SK-N-SH (cell line): ENCODE measurements at regions of chr4 and their contacts with region 1.

Region 1: GRCh38 chr4:152640058-152640833 is 39.6 kb downstream of the TMEM154 start:
- DNase-seq: peak; percentile 42
- H3K4me3 ChIP-seq: no peak overlapping the region
- H3K27ac ChIP-seq: no peak overlapping the region
- H3K4me1 ChIP-seq: peaks cover 0 to 13% of the 10 kb centered on the region in 2 experiments; a peak in 1 of 4 replicates
- H3K27me3 ChIP-seq: no peaks in the 10 kb centered on the region
- CTCF ChIP-seq: peak; percentile 79
- EP300 ChIP-seq: no peak
- RAD21 ChIP-seq: peak; percentile 78

Region 2: DNA sequence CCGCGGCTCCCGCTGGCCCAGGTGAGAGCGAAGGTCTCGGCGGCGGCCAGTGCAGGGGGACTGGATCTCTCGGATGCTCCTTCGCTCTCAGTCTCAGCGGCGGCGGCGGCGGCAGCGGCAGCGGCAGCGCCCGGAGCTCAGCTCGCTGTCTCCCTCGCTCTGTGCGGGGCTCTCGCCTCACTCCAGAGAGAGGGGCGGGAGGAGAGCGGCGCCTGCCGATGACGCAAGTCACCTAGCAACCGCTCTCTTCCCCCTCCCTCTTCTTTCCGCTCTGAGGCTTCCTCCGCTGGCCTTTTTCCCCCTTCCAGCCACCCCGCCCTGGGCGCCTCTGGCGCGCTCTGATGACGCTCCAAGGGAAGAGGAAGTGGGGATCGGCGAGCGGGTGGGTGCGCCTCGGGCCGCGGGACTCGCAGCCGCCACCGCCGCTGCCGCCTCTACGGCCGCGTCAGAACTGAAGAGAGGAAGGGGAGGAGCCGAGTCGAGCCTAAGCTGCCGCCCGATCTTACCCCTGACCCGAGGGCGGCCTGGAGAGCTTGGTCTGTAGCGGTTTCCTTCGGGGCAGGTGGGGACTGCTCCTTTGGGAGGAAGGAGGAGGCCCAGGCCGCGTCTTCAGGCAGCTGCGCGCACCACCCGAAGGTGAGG is 104.2 kb before region 1 on chr4 and contains the start of gene FBXW7:
- CTCF ChIA-PET with region 1: interaction called, 10 read pairs
- POLR2A ChIA-PET with region 1: no interaction called
- DNase-seq: peak; percentile 97
- H3K4me3 ChIP-seq: peak within 1 kb of the TSS; percentile 96 to 99
- H3K27ac ChIP-seq: peak within 1 kb of the TSS; percentile 91
- H3K4me1 ChIP-seq: peaks cover 8 to 18% of the 10 kb centered on the region in 2 experiments; a peak in 3 of 4 replicates
- H3K27me3 ChIP-seq: no peaks in the 10 kb centered on the region
- CTCF ChIP-seq: no peak
- EP300 ChIP-seq: 0 out of 4 replicates have a peak, but pooled peaks of 1 of the 2 experiments have one; percentile 5
- RAD21 ChIP-seq: no peak
- polyA plus RNA-seq, gene FBXW7: 7.7 and 11.4 TPM in 2 replicates

Region 3: GRCh38 chr4:152628128-152628527 is 12.1 kb before region 1 on chr4:
- CTCF ChIA-PET with region 1: interaction called, 36 read pairs
- POLR2A ChIA-PET with region 1: no interaction called
- DNase-seq: no peak
- H3K4me3 ChIP-seq: no peak overlapping the region
- H3K27ac ChIP-seq: no peak overlapping the region
- H3K4me1 ChIP-seq: peaks cover 0 to 2% of the 10 kb centered on the region in 2 experiments; a peak in 1 of 4 replicates
- H3K27me3 ChIP-seq: no peaks in the 10 kb centered on the region
- CTCF ChIP-seq: no peak
- EP300 ChIP-seq: no peak
- RAD21 ChIP-seq: no peak

Region 4: DNA sequence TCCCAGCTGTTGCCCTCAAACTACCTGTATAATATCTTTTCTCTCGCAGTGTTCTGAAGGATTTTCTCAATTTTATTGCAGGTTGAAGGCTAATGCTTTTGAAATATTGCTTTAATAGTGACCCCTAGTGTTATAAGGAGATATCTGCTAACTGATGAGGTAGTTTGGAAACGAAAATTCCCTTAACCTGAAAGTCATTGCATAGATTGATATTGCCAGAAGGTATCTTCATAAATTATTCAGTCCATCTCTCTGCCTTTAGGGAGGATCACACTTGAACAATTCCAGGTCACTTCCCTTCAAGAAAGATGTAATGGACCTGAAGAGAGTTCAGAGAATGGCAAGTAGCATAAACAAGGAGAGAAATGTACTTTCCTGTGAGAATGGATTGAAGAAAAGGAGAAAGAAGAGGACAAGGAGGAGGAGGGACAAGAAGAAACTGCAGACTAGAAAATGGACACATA is 95.2 kb after region 1 on chr4:
- CTCF ChIA-PET with region 1: interaction called, 23 read pairs
- POLR2A ChIA-PET with region 1: no interaction called
- DNase-seq: peak; percentile 50
- H3K4me3 ChIP-seq: no peak overlapping the region; a peak in 1 of 4 replicates
- H3K27ac ChIP-seq: no peak overlapping the region
- H3K4me1 ChIP-seq: no peaks in the 10 kb centered on the region
- H3K27me3 ChIP-seq: no peaks in the 10 kb centered on the region
- CTCF ChIP-seq: peak; percentile 73
- EP300 ChIP-seq: no peak
- RAD21 ChIP-seq: peak; percentile 74

Region 5: GRCh38 chr4:152880263-152880662 is 240.0 kb after region 1 on chr4:
- CTCF ChIA-PET with region 1: no interaction called
- POLR2A ChIA-PET with region 1: no interaction called
- DNase-seq: no peak
- H3K4me3 ChIP-seq: no peak overlapping the region
- H3K27ac ChIP-seq: no peak overlapping the region
- H3K4me1 ChIP-seq: no peaks in the 10 kb centered on the region
- H3K27me3 ChIP-seq: no peaks in the 10 kb centered on the region
- CTCF ChIP-seq: no peak
- EP300 ChIP-seq: no peak
- RAD21 ChIP-seq: no peak

Region 6: DNA sequence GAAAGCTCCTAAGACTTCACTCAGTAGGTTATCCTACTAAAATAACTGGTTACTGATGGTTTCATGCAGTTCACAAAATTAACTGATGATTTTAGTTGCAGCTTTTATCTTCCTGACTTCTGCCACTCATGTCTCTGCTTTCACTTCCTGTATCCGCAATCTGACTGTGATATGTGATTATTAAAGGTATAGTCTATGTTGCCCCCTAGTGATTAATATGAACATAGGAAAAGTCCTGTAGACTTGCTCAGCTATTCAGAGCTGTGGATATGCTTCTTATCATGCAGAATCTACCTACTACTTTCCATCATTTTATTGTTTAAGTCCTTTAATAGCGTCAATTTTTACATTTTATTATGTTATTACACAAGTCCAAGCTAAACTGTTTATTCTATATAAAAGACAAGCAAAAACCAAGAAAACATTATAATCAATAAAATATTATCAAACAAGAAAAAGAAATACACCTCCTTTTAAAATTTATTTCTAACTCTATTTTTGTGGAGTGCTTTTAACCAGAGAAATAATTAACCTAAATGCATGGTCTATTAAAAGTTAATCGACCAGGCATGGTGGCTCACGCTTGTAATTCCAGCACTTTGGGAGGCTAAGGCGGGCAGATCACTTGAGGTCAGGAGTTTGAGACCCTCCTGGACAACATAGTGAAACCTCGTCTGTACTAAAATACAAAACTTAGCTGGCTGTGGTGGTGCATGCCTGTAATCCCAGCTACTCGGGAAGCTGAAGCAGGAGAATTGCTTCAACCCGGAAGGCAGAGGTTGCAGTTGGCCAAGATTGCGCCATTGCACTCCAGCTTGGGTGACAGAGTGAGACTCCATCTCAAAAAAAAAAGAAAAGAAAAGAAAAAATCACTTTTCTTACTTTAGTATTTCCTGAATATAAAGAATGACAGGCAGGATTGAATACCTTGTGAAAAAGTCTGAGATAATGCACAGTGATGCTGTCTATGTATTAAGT is 1003.4 kb after region 1 on chr4:
- CTCF ChIA-PET with region 1: no interaction called
- POLR2A ChIA-PET with region 1: no interaction called
- DNase-seq: peak; percentile 69
- H3K4me3 ChIP-seq: no peak overlapping the region
- H3K27ac ChIP-seq: no peak overlapping the region
- H3K4me1 ChIP-seq: no peaks in the 10 kb centered on the region; a peak in 1 of 4 replicates
- H3K27me3 ChIP-seq: no peaks in the 10 kb centered on the region
- CTCF ChIP-seq: peak; percentile 67
- EP300 ChIP-seq: no peak
- RAD21 ChIP-seq: peak; percentile 75